IMR-90 (cell line): ENCODE measurements at regions of chr18 and their contacts with region 1.

Region 1: GRCh38 chr18:49300538-49300937 is 159.9 kb downstream of the DYM start:
- DNase-seq: no peak
- ATAC-seq: no peak
- H3K4me3 ChIP-seq: no peak overlapping the region
- H3K27ac ChIP-seq: no peak overlapping the region
- H3K4me1 ChIP-seq: no peaks in the 10 kb centered on the region
- H3K27me3 ChIP-seq: no peaks in the 10 kb centered on the region
- CTCF ChIP-seq: no peak
- POLR2A ChIP-seq: no peak
- RAD21 ChIP-seq: no peak

Region 2: GRCh38 chr18:49273241-49273880 is 27.2 kb before region 1 on chr18:
- CTCF ChIA-PET with region 1: no interaction called
- POLR2A ChIA-PET with region 1: interaction called, 13 read pairs
- dilution Hi-C with region 1: no loop called
- in situ Hi-C with region 1: no loop called
- intact Hi-C with region 1: no loop called
- DNase-seq: peak; percentile 39
- ATAC-seq: no peak
- H3K4me3 ChIP-seq: no peak overlapping the region
- H3K27ac ChIP-seq: no peak overlapping the region
- H3K4me1 ChIP-seq: peaks cover 6% of the 10 kb centered on the region; the same call in 1 of the 2 replicates
- H3K27me3 ChIP-seq: no peaks in the 10 kb centered on the region
- CTCF ChIP-seq: no peak
- POLR2A ChIP-seq: no peak
- RAD21 ChIP-seq: no peak